ENCODE measurements at regions of chr17 and their contacts with region 1.

Region 1: DNA sequence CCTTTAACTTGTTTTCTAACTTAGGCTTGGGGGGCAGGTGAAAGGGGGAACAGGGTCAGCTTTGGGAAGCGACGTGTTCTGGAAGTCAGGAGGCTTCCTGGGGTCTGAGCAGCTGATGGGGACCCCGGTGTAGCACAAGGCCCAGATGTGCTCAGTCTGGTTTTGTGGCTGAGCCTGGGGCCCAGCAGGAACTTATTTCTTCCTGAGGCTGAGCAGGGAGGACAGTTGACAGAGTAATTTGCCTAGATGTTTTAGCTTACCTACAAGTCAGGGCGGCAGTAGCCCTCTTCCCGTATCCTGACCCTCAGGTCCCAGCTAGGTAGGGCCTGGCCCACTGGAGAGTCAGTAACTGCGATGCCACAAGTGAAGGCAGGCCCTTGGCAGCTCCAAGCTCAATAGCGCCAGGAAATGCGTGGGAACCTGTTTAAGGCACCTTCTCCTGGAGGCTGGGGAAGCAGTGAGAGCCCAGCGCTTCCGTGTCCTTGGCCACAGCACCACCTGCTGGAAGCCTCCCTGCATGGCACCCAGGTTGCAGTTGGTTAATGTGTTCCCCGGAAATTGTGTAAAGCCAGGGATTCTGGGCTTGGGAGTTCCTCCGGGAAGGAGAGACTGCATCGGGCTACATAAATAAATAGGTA is 5.2 kb downstream of the CCR7 start:
- DNase-seq: peak; percentile 76 to 96 (median 90)

Region 2: DNA sequence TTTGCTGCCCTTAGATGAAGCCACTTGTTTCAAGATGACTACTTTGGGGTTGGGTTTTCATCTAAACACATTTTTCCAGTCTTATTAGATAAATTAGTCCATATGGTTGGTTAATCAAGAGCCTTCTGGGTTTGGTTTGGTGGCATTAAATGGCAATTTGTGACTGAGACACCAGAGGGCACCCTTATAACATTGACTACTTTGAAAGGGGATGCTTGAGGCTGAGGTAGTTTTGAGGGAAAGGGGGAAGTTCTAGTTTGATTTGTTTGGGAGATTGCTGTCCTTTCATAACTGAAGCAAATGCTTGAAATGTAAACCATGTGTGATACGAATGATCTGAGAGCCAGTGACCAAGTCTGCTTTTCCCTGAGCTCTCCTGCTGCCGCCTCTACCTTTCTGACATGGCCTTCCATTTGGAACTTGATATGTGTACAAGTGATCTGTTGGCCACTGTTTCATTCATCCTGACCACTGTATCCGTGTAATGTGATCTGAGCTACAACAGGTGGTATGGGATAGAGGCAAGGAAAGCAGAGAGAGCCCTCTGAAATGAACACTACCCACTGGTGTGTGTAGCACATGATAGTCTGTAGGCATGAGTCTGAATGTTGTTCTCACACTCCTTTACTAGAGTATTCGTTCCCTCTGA is 256.9 kb before region 1 on chr17:
- intact Hi-C with region 1: loop called (anchors 10 kb)
- DNase-seq: peak in 21 of 42 donors; percentile 41 to 86 (median 63)

Region 3: DNA sequence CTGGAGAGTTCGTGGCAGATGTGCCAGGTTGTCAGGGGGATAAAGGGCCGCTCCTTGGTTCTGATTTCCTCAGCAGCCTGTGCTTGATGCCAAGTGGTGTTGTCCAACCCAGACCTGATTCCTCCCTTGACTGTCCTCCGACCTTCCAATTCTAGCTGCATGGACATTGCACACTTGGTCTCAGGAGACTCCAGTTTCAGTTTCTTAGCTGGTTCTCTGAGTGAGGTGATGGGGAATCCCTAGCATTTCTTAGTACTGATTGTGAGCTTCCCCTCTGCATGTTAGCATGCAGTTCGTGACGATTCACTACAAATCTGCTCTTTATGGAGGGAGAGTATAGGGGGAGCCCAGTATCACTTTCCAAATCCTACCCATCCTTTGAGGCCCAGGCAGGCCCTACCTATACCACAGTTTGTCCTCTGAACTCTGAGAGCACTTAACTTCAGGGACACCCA is 17.6 kb after region 1 on chr17:
- intact Hi-C with region 1: no loop called
- DNase-seq: no peak

Region 4: DNA sequence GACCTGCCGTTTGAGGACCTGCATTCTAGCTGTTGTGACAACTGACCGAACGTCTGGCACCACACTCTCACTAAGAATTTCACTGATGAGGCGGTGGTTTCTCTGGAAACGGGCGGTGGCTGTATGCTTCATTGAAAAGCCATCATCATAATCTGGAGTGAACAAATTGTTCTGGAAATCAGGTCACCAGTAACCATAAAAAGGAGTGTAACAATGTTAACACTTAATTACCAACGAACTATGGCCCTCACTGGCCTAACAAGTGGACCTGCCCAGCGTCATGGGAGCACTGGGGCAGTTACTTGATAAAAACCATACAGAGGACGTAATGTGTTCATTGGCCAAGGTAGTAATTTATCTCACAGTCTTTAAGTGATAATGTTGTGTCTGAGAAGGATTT is 72.1 kb after region 1 on chr17:
- intact Hi-C with region 1: no loop called
- DNase-seq: no peak